Transverse colon (tissue), 4 donors: ENCODE measurements at regions of chr9 and their contacts with region 1.

Region 1: DNA sequence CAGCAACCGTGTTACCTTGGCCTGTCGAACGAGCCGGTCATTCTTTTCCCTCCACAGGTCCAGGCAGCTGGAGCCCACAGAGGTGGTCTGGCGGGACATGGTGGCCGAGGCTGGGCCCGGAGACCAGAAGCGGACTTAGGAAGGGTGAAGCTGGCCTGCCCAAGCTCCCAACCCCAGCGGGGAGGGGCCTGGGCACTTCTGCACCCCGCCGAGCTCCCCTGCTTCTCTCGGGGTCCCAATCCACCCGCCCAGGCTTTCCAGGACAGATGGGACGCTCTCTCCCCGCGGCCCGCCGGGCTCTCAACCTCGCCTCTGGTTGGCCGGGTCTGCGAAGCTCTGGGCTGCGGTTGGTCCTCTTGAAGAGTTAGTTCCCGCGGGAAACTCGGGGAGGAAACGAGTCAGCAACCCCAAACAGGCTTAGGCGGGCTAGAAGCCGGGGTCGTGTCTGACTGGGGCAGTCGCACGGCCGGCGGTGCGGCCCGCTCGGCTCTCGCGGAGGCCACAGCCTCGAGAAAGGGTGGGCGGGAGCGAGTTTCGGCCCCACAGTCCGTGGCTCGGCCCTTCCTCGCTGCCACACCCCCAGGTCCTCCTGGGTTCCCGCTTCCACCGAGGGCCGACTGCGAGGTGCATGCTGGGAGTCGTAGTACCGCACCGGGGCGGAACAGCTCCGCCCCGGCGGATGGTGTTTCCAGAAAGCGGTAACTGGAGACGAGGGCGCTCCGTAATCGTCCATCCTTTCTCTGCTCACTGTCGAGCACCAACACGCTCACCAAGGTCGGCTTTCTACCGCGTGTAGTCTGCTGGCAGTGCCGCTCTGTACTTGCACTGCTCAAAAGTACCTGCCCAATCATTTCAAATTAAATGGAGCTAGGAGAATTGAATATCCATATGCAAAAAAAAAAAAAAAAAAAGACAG is at the start of gene FANCG:
- DNase-seq: peak; percentile 93
- H3K4me3 ChIP-seq: peak within 1 kb of the TSS; percentile 62 to 86 (median 70)
- H3K27ac ChIP-seq: peak within 1 kb of the TSS; percentile 66 to 84 (median 79)
- H3K4me1 ChIP-seq: peaks cover 5 to 21% (median 15%) of the 10 kb centered on the region in 4 donors
- H3K27me3 ChIP-seq: no peaks in the 10 kb centered on the region
- CTCF ChIP-seq: no peak
- EP300 ChIP-seq: no peak
- POLR2A ChIP-seq: peak; percentile 42
- total RNA-seq, gene FANCG: 6.6 to 90.0 (median 51.6) TPM

Region 2: GRCh38 chr9:34651876-34652601 is 427.6 kb before region 1 on chr9 and contains the start of gene IL11RA:
- in situ Hi-C with region 1: no loop called
- intact Hi-C with region 1: loop called (anchors 10 kb)
- DNase-seq: peak; percentile 90
- H3K4me3 ChIP-seq: peak within 1 kb of the TSS; percentile 11 to 36 (median 24)
- H3K27ac ChIP-seq: peak within 1 kb of the TSS; percentile 82 to 89 (median 86)
- H3K4me1 ChIP-seq: peaks cover 29 to 58% (median 48%) of the 10 kb centered on the region in 4 donors
- H3K27me3 ChIP-seq: no peaks in the 10 kb centered on the region
- CTCF ChIP-seq: no peak
- EP300 ChIP-seq: no peak
- POLR2A ChIP-seq: peak; percentile 61
- total RNA-seq, gene IL11RA: 27.0 to 94.6 (median 47.5) TPM

Region 3: DNA sequence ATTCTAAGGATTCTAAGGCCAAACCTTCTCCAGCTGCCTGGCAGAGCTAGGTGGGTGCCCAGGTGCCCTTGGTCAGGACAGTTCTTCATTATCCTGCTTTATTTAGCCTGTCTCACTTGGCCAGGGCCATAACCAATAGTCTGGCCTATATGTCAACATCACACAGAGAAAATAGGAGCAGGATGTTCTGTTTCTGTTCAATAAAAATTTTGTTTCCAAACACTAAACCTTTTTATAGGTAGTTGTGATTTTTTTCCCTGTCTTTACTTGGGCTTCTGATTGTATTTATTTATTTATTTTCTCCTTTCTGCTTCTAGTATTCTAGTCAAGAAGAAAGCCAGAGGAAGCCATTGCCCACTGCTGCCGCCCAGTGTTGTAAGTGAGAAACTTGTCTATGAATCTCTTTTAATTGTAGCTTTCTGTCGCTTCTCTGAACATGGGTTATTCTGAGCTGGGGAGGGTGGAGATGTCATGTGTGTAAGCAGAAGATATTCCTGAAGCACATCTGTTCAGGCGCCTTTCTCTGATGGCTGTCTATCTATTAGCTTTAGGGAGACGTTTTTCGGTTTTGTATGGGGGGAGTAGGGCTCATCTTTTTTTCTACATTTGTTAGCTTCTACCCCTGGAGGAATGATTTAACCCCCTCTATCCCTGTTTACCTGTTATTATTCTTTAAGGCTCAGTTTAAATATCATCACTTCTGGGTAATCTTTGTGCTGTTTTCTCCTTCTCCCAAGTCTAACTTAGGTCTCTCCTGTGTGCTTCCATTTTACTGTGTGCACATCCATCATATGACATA is 179.2 kb after region 1 on chr9:
- in situ Hi-C with region 1: no loop called
- intact Hi-C with region 1: no loop called
- DNase-seq: peak; percentile 79
- H3K4me3 ChIP-seq: no peak overlapping the region
- H3K27ac ChIP-seq: peak overlapping the region in 3 of 4 donors; percentile 34 to 51 (median 46)
- H3K4me1 ChIP-seq: peaks cover 0 to 22% (median 10%) of the 10 kb centered on the region in 4 donors
- H3K27me3 ChIP-seq: no peaks in the 10 kb centered on the region
- CTCF ChIP-seq: peak; percentile 58 to 83 (median 71)
- EP300 ChIP-seq: no peak
- POLR2A ChIP-seq: no peak